GM18951 (cell line): ENCODE measurements at regions of chr13 and their contacts with region 1.

Region 1: DNA sequence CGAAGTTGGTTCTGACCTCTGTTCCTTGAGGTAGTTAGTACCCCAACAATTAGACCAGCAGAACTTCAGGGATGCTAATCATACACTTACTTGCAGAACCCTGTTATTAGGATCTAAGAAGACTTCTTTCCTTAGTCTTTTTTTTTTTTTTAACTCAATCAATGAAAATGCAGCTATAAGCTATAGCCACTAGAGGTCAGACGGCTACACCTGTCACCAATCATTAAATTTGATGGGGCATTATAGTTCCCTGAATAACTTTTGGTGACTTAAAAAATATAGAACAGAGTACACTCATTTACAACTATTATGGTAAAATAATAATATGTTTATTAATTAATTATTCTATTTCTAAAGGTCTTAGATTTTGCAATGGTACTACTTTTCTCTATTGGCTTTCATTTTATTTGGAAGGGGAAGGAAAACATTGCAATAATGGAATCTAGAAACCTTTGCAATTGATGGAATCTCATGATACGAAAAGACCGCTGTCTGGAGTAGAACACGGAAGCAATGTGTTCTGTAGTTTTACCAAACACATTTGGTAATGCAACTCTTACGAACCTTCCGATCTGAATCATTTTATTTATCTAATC is 483.2 kb downstream of the DIAPH3 start:
- POLR2A ChIP-seq: no peak

Region 2: GRCh38 chr13:59906413-59907049 is 226.0 kb after region 1 on chr13:
- in situ Hi-C with region 1: loop called (anchors 10 kb)
- POLR2A ChIP-seq: no peak

Region 3: DNA sequence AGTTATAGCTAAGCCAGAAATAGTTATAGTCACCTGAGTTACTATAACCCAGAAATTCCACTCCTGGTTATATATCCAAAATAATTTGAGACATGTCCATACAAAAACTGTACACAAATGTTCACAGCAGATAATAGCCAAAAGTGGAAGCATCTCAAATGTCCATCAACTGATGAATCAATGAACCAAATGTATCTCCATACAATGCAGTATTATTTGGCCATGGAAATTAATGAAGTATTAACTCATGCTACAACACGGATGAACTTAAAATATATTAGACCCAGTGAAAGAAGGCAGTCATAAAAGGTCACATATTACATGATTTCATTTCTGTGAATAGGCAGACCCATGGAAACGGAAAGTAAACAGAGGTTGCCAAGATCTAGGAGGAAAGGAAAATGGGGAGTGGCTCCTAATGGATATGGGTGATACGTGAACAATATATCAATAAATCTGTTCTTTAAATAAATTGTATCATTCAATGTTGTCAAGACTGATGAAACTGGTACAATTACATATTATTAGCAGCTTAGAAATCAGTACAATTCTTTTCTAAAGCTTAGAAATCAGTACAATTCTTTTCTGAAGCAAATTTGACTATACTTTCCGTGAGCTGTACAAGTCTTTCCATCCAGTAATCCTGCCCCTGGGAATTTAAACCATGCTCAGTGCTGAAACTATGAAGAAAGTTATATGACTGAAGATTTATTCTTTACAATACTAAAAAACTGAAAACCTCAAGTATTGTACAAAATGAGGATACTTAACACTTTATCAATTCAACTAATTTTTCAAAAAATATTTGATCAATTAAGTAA is 530.2 kb after region 1 on chr13:
- in situ Hi-C with region 1: no loop called
- POLR2A ChIP-seq: no peak

Region 4: GRCh38 chr13:60627071-60627686 is 946.7 kb after region 1 on chr13:
- in situ Hi-C with region 1: no loop called
- POLR2A ChIP-seq: no peak